MCF 10A (cell line): ENCODE measurements at regions of chr20 and their contacts with region 1.

Region 1: GRCh38 chr20:36199345-36200257 is 36.7 kb upstream of the AAR2 start:
- DNase-seq: peak; percentile 78
- H3K4me3 Mint-ChIP-seq: no peak overlapping the region
- H3K27ac Mint-ChIP-seq: no peak overlapping the region
- H3K4me1 Mint-ChIP-seq: no peaks in the 10 kb centered on the region
- H3K27me3 Mint-ChIP-seq: no peaks in the 10 kb centered on the region
- CTCF ChIP-seq: peak; percentile 84

Region 2: GRCh38 chr20:36145877-36146707 is 53.5 kb before region 1 on chr20:
- CTCF ChIA-PET with region 1: interaction called, 18 read pairs
- POLR2A ChIA-PET with region 1: no interaction called
- intact Hi-C with region 1: no loop called
- DNase-seq: no peak
- H3K4me3 Mint-ChIP-seq: no peak overlapping the region
- H3K27ac Mint-ChIP-seq: no peak overlapping the region
- H3K4me1 Mint-ChIP-seq: peaks cover 5% of the 10 kb centered on the region
- H3K27me3 Mint-ChIP-seq: peaks cover 11% of the 10 kb centered on the region
- CTCF ChIP-seq: no peak

Region 3: DNA sequence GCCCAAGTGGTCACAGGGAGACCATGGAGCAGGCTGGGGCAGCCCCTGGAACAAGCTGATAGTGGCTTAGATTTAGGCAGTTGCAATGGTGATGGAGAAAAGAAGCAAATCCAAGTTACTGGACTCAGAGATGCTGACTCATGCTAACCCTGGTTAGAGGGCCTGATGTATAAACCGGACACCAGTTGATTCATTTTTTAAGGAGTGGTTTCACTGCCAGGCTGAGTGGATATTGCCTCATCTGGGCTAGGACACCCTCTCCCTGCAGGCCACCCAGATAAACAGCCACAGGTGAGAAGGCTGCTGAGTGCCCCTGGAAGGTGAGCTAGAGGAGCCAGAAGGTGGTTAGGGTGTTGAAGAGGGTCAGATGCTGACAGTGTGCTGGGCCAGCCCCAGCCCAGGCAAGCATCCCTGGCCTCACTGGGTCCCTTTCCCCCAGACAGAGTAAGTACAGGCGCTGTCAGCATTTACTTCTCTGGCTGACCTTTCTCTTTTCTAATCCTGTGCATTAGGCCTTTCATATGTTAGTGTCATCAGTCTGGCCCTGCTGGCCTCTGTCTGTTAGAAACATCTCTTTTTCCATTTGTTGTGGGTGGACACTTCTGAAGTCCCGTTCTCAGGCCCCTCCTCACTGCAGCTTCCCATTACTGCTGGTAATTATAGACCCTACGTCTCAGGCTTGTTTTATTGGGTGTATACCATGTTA is 31.6 kb before region 1 on chr20:
- CTCF ChIA-PET with region 1: interaction called, 23 read pairs
- POLR2A ChIA-PET with region 1: no interaction called
- intact Hi-C with region 1: no loop called
- DNase-seq: peak; percentile 85
- H3K4me3 Mint-ChIP-seq: no peak overlapping the region
- H3K27ac Mint-ChIP-seq: peak overlapping the region; percentile 55
- H3K4me1 Mint-ChIP-seq: peaks cover 13% of the 10 kb centered on the region
- H3K27me3 Mint-ChIP-seq: no peaks in the 10 kb centered on the region
- CTCF ChIP-seq: no peak

Region 4: GRCh38 chr20:36214684-36215256 is 15.2 kb after region 1 on chr20:
- CTCF ChIA-PET with region 1: interaction called, 33 read pairs
- POLR2A ChIA-PET with region 1: no interaction called
- intact Hi-C with region 1: no loop called
- DNase-seq: peak; percentile 51
- H3K4me3 Mint-ChIP-seq: no peak overlapping the region
- H3K27ac Mint-ChIP-seq: no peak overlapping the region
- H3K4me1 Mint-ChIP-seq: no peaks in the 10 kb centered on the region
- H3K27me3 Mint-ChIP-seq: peaks cover 13% of the 10 kb centered on the region
- CTCF ChIP-seq: peak; percentile 56

Region 5: GRCh38 chr20:36919715-36920333 is 720.2 kb after region 1 on chr20:
- CTCF ChIA-PET with region 1: interaction called, 5 read pairs
- POLR2A ChIA-PET with region 1: no interaction called
- intact Hi-C with region 1: loop called (anchors 5 kb)
- DNase-seq: peak; percentile 66
- H3K4me3 Mint-ChIP-seq: no peak overlapping the region
- H3K27ac Mint-ChIP-seq: no peak overlapping the region
- H3K4me1 Mint-ChIP-seq: no peaks in the 10 kb centered on the region
- H3K27me3 Mint-ChIP-seq: no peaks in the 10 kb centered on the region
- CTCF ChIP-seq: peak; percentile 65